ENCODE measurements at regions of chr13 and their contacts with region 1.

Region 1: GRCh38 chr13:32164622-32165268 is 133.2 kb downstream of the FRY start:
- DNase-seq: no peak
- H3K4me3 ChIP-seq: no peak overlapping the region
- H3K27ac ChIP-seq: no peak overlapping the region
- H3K4me1 ChIP-seq: no peaks in the 10 kb centered on the region
- H3K27me3 ChIP-seq: no peaks in the 10 kb centered on the region
- CTCF ChIP-seq: peak in 2 of 4 experiments; percentile 13 to 18
- POLR2A ChIP-seq: no peak

Region 2: GRCh38 chr13:32205431-32206096 is 40.8 kb after region 1 on chr13:
- intact Hi-C with region 1: loop called (anchors 5 kb)
- DNase-seq: no peak
- H3K4me3 ChIP-seq: no peak overlapping the region
- H3K27ac ChIP-seq: no peak overlapping the region
- H3K4me1 ChIP-seq: no peaks in the 10 kb centered on the region
- H3K27me3 ChIP-seq: peaks cover 2% of the 10 kb centered on the region
- CTCF ChIP-seq: no peak
- POLR2A ChIP-seq: no peak

Measured in prostate gland (tissue), 2 donors.